Activated B cell treated with CpG ODN at 0.5 μM for 24 hours (primary cell): ENCODE measurements at regions of chr2 and their contacts with region 1.

Region 1: GRCh38 chr2:217223222-217223930 is 363.5 kb upstream of the TNP1 start:
- DNase-seq: no peak
- ATAC-seq: peak; percentile 83
- H3K4me3 Mint-ChIP-seq: peak overlapping the region; percentile 9
- H3K27ac Mint-ChIP-seq: peak overlapping the region; percentile 38
- H3K4me1 Mint-ChIP-seq: peaks cover 18% of the 10 kb centered on the region
- H3K27me3 Mint-ChIP-seq: peaks cover 38% of the 10 kb centered on the region
- CTCF ChIP-seq: no peak

Region 2: DNA sequence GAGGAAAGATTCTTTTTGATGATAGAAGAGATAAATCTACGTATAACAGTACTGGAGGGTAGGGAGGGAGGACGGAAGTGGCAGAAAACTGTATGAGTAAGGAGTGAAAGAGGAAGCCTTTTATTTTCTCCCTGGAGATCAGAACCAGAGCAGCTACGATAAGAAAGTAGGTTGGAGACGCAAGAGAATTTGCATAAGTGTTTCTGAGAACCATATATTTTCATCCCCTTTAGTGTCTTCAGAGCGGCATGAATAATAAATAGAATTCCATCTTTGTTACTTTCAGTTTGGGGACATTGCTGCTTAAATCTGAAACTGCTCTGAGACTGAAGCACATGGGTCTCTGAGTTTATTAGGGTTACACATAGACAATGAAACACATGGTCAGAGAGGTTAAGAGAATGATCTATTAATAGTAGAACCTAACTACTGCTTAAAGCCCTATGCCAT is 133.3 kb before region 1 on chr2:
- CTCF ChIA-PET with region 1: no interaction called
- POLR2A ChIA-PET with region 1: no interaction called
- intact Hi-C with region 1: loop called (anchors 1 kb)
- DNase-seq: no peak
- ATAC-seq: peak; percentile 91
- H3K4me3 Mint-ChIP-seq: peak overlapping the region; percentile 45
- H3K27ac Mint-ChIP-seq: no peak overlapping the region
- H3K4me1 Mint-ChIP-seq: peaks cover 23% of the 10 kb centered on the region
- H3K27me3 Mint-ChIP-seq: peaks cover 2% of the 10 kb centered on the region
- CTCF ChIP-seq: no peak

Region 3: DNA sequence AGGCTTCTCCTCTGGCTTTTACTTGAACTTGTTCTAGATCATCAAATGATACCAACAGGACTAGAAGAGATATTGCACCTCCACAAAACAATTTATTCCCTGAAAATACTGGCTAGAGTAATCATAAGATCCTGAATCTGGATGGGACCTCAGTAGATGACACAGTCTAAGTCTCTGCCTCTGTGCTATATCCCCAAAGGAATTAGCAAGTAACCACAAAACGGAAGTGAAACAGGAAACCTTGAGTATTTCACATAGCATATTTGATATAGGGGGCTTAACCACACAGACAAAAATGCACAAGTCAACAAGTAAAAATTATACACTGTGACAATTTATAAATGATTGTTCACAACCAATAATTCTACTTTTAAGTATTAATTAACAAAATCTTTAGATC is 93.4 kb after region 1 on chr2:
- CTCF ChIA-PET with region 1: no interaction called
- POLR2A ChIA-PET with region 1: no interaction called
- intact Hi-C with region 1: loop called (anchors 2 kb)
- DNase-seq: no peak
- ATAC-seq: peak; percentile 90
- H3K4me3 Mint-ChIP-seq: no peak overlapping the region
- H3K27ac Mint-ChIP-seq: no peak overlapping the region
- H3K4me1 Mint-ChIP-seq: peaks cover 17% of the 10 kb centered on the region
- H3K27me3 Mint-ChIP-seq: peaks cover 52% of the 10 kb centered on the region
- CTCF ChIP-seq: no peak

Region 4: DNA sequence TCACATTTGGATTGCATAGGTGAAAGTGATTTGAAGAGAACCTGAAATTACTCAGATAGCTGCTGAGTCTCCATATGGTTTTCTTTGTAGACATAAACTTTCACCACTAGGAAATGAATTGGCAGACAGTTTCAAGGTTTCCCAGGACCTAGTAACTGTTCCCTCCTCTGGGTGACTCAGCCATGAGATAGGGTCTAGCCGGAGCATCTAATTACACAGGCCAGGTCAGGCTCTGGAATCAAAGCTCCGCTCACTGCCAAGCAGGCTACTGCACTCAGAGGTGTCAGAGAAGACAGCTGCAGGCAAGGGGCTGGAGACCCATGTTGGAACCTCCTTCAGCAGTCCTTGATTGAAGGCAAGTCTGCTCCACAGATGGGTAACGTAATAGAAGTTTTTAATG is 350.2 kb after region 1 on chr2:
- CTCF ChIA-PET with region 1: no interaction called
- POLR2A ChIA-PET with region 1: no interaction called
- intact Hi-C with region 1: no loop called
- DNase-seq: no peak
- ATAC-seq: no peak
- H3K4me3 Mint-ChIP-seq: no peak overlapping the region
- H3K27ac Mint-ChIP-seq: no peak overlapping the region
- H3K4me1 Mint-ChIP-seq: no peaks in the 10 kb centered on the region
- H3K27me3 Mint-ChIP-seq: peaks cover 6% of the 10 kb centered on the region
- CTCF ChIP-seq: no peak

Region 5: GRCh38 chr2:219002395-219003266 is 1779.3 kb after region 1 on chr2:
- CTCF ChIA-PET with region 1: no interaction called
- POLR2A ChIA-PET with region 1: no interaction called
- intact Hi-C with region 1: no loop called
- DNase-seq: no peak
- ATAC-seq: peak; percentile 23
- H3K4me3 Mint-ChIP-seq: peak overlapping the region; percentile 75
- H3K27ac Mint-ChIP-seq: no peak overlapping the region
- H3K4me1 Mint-ChIP-seq: peaks cover 21% of the 10 kb centered on the region
- H3K27me3 Mint-ChIP-seq: peaks cover 59% of the 10 kb centered on the region
- CTCF ChIP-seq: no peak